Prostate gland (tissue), 2 donors: ENCODE measurements at regions of chr12 and their contacts with region 1.

Region 1: DNA sequence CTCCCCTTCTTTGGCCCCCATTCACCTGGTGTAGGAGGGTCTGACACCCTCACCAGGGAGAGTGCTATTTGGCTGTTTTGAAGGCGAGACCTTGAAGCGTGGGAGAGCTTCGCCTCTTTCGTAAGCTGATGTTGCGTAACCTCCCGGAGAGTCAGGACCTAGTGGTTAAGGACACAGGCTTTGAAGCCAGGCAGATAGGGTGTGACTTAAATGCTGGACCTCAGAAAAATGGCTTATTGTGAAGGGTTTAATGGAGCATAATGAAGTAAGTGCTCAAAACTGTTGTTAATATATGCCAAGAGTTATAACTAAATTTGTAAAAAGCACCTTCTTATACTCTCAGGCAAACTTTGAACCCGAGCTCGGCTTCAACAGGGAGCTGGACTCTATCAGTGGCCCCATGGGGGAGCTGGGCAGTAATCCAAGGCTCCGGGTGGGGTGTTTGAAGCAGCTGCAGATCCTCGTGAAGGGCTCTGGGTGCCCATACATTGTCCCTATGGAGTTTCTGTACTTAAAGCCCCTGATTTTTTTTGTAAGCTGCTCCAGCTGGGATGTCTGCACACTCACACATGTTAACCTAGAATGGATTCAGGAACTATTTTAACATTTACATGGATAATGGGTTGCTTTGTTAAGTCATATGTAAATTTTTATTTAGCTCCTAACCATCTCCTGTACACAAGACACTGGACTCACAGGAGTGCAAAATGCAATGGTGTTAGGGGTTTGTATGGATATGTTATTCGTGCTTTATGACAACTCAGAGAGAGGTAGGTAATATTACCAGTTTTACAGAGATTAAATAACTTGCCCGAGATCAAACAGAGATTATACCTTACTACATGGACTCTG is 26.0 kb downstream of the PPFIBP1 start:
- DNase-seq: peak; percentile 87
- H3K4me3 ChIP-seq: no peak overlapping the region
- H3K27ac ChIP-seq: peak overlapping the region; percentile 40 to 57
- H3K4me1 ChIP-seq: peaks cover 8% of the 10 kb centered on the region
- H3K27me3 ChIP-seq: no peaks in the 10 kb centered on the region
- CTCF ChIP-seq: no peak
- POLR2A ChIP-seq: no peak

Region 2: GRCh38 chr12:27619308-27619707 is 69.3 kb after region 1 on chr12:
- intact Hi-C with region 1: loop called (anchors 10 kb)
- DNase-seq: no peak
- H3K4me3 ChIP-seq: no peak overlapping the region
- H3K27ac ChIP-seq: no peak overlapping the region
- H3K4me1 ChIP-seq: no peaks in the 10 kb centered on the region
- H3K27me3 ChIP-seq: no peaks in the 10 kb centered on the region
- CTCF ChIP-seq: no peak
- POLR2A ChIP-seq: no peak